ENCODE measurements at regions of chr12 and their contacts with region 1.

Region 1: GRCh38 chr12:21527451-21528180 is 1.5 kb downstream of the SPX start:
- DNase-seq: peak; percentile 51
- H3K4me3 Mint-ChIP-seq: peak overlapping the region; percentile 86
- H3K27ac Mint-ChIP-seq: no peak overlapping the region
- H3K4me1 Mint-ChIP-seq: peaks cover 5% of the 10 kb centered on the region
- H3K27me3 Mint-ChIP-seq: peaks cover 27% of the 10 kb centered on the region

Region 2: DNA sequence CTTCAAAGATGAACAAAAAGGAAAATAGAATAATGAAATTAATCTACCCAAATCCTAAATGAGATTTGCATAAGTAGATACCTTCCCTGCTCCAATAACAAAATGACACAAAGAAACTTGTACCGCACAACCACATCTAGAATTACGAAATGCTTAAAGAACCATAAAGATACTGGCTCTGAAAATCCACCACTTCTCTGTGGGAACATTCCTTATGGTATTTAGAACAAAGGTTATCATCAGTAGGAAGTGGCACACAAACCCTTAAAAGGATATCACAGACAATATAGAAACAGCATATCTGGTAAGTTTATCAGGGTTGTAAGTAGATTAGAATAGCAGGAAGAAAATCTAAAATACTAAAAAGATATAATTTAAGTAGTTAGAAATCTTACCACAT is 143.4 kb before region 1 on chr12:
- intact Hi-C with region 1: no loop called
- DNase-seq: no peak
- H3K4me3 Mint-ChIP-seq: no peak overlapping the region
- H3K27ac Mint-ChIP-seq: no peak overlapping the region
- H3K4me1 Mint-ChIP-seq: no peaks in the 10 kb centered on the region
- H3K27me3 Mint-ChIP-seq: peaks cover 6% of the 10 kb centered on the region

Region 3: DNA sequence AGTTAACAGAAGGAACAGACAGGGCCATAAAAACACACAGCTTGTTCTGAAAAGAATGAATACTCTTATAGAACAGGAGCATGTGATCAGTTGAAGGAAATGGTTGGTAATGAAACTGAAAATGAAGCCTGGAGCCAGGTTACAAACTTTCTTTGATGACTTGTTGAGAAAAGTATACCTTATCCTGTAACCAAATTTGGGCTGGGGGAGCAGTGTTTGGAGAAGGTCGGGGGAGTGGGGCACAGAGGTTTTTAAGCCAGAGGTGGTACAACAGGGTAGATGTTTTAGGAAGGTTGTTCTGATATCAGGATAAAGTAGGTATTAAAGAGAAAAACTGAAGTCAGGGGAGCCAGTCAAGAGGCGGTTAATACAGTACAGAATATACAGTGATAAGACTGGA is 17.8 kb before region 1 on chr12:
- intact Hi-C with region 1: loop called (anchors 1 kb)
- DNase-seq: peak; percentile 33
- H3K4me3 Mint-ChIP-seq: peak overlapping the region; percentile 76
- H3K27ac Mint-ChIP-seq: peak overlapping the region; percentile 89
- H3K4me1 Mint-ChIP-seq: peaks cover 42% of the 10 kb centered on the region
- H3K27me3 Mint-ChIP-seq: no peaks in the 10 kb centered on the region

Region 4: GRCh38 chr12:21642707-21643389 is 115.2 kb after region 1 on chr12:
- intact Hi-C with region 1: loop called (anchors 5 kb)
- DNase-seq: no peak
- H3K4me3 Mint-ChIP-seq: no peak overlapping the region
- H3K27ac Mint-ChIP-seq: peak overlapping the region; percentile 21
- H3K4me1 Mint-ChIP-seq: peaks cover 65% of the 10 kb centered on the region
- H3K27me3 Mint-ChIP-seq: no peaks in the 10 kb centered on the region

Region 5: DNA sequence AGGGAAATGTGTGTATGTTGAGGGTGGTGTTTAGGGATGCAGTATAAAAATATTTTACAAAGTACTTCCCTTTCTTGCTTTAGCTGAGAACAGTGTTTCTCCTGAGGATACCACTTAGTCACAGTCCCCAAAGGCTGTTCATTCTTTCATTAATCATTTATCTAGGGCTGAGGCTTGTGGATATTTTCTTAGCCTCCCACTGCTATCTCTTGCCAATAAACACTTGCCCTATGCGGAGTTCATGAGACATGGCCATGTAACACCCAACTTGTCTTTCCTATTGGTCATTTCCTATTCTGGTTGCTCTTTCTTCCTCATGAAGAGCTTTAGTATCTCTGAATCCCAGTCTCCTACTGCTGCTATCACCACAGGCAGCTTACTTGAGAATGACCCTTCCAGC is 1172.5 kb after region 1 on chr12:
- intact Hi-C with region 1: no loop called
- DNase-seq: no peak
- H3K4me3 Mint-ChIP-seq: no peak overlapping the region
- H3K27ac Mint-ChIP-seq: no peak overlapping the region
- H3K4me1 Mint-ChIP-seq: no peaks in the 10 kb centered on the region
- H3K27me3 Mint-ChIP-seq: peaks cover 21% of the 10 kb centered on the region

Measured in activated T-helper 1 cell treated with anti-CD3 and anti-CD28 coated beads, Interleukin-12 subunit alpha, Interleukin-12 subunit beta, Interleukin-2, Interleukin-4 antibody, amounts not matched to agents 30 ng/mL and 10 ng/mL and 1 ng/mL, durations not matched to agents 14 hours and 24 hours and 36 hours (primary cell).